Psoas muscle (tissue), 8 donors: ENCODE measurements at regions of chr19 and their contacts with region 1.

Region 1: DNA sequence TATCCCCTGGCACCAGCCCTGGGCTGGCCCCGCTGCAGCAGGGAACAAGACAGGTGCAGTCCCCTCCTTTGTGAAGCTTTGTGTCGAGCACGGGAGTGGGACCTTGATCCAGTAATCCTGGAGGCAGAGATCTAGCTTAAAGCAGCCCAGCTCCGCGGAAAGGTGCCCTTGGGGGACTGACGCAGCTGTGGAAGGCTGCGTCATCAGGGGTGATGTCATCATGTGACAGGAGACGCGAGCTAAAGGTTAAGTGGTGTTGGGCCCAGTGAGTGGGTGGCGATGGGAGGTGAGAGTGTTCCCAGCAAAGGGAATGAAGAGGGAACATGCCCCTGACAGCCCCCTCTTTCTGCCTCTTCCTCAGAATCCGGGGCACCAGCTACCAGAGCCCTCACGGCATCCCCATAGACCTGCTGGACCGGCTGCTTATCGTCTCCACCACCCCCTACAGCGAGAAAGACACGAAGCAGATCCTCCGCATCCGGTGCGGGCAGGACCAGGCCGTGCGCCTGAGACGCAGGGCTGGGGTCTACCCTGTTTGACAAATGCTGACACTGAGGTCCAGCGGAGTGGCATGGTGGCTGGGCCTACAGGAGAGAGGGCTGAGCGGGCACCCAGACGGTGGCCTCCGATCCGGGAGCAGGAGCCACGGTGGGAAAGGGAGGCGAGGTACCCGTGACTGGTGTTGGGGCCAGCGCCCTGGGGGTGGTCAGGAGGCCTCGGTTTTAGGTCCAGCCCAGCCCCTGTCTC is 2.6 kb downstream of the LHB start:
- DNase-seq: no peak
- ATAC-seq: no peak
- H3K4me3 ChIP-seq: no peak overlapping the region
- H3K27ac ChIP-seq: no peak overlapping the region
- H3K4me1 ChIP-seq: peaks cover 7% of the 10 kb centered on the region
- H3K27me3 ChIP-seq: no peaks in the 10 kb centered on the region
- CTCF ChIP-seq: no peak

Region 2: DNA sequence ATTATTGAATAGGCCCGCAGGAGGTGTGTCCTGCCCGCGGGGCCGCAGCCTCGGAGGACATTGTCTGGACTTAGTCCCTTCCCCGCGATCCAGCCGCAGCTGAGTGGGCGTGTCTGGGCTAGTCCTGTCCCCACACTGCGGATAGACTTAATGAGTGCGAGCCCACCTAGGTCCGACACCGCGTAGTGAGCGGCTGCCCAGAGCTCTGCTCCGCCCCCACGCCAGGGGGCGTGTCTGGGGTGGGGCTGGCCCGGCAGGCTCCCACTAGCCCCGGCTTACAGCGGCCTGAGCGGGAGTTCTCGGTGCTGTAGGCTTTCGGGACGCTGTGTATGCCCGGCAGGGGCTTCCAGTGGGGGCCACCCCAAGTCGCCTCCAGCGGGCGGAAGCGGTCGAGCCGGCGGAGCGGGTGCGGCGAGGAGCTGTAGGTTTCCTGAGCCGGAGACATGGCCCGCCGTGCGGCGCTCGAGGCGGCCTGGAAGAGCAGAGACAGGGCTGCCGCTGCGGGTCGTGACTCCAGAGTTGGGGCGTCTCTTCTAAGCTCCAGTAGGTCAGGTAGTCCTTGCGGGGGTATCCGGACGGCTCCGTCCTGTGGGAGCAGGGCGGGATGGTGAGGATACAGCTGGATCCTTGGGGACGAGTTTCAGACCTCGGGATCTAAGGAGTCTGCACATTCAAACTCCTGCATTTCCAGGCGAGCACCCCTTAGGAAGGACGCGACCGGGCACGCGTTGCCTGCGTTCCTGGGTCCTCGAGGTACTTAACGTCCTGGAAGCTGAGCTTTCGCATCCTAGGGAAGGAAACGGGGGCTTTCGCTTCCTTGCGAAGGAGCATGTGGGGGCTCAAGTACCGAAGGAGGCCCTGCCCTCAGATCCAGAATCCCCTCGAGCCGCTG is 42.0 kb after region 1 on chr19:
- intact Hi-C with region 1: loop called in 1 of 2 experiments (anchors 5 kb)
- DNase-seq: peak; percentile 66 to 77
- ATAC-seq: peak; percentile 79 to 81 (median 80)
- H3K4me3 ChIP-seq: peak overlapping the region; percentile 82
- H3K27ac ChIP-seq: peak overlapping the region; percentile 67
- H3K4me1 ChIP-seq: peaks cover 5% of the 10 kb centered on the region
- H3K27me3 ChIP-seq: no peaks in the 10 kb centered on the region
- CTCF ChIP-seq: peak; percentile 46